PC-3 (cell line): ENCODE measurements at regions of chr5 and their contacts with region 1.

Region 1: GRCh38 chr5:38382898-38383297 is 124.5 kb downstream of the EGFLAM start:
- DNase-seq: peak; percentile 92
- ATAC-seq: peak; percentile 86
- H3K4me3 ChIP-seq: no peak overlapping the region
- H3K27ac ChIP-seq: no peak overlapping the region
- H3K4me1 ChIP-seq: peaks cover 22% of the 10 kb centered on the region
- H3K27me3 ChIP-seq: no peaks in the 10 kb centered on the region
- CTCF ChIP-seq: peak; percentile 97

Region 2: DNA sequence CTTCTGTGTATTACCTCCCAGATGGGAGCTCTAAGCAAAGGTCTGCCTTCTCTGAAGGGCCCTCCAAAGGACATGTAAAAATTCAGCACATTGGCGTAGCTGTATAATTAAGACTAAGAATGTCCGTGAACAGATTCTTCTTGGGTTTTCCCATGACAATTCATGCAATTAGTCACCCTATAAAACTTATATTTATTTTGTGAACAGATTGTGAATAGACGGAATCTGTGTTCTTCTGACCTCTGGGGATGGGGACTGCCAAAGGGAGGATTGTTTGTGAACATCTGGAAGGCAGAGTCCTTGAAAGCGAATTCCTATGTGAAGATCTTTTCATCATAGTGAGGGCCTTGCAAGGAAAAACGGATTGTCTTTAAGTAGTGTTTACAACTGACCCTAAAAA is 13.2 kb before region 1 on chr5:
- CTCF ChIA-PET with region 1: no interaction called
- POLR2A ChIA-PET with region 1: no interaction called
- intact Hi-C with region 1: loop called (anchors 1 kb)
- DNase-seq: peak; percentile 70
- ATAC-seq: peak; percentile 92
- H3K4me3 ChIP-seq: no peak overlapping the region
- H3K27ac ChIP-seq: no peak overlapping the region
- H3K4me1 ChIP-seq: peaks cover 12% of the 10 kb centered on the region
- H3K27me3 ChIP-seq: peaks cover 28% of the 10 kb centered on the region
- CTCF ChIP-seq: no peak

Region 3: DNA sequence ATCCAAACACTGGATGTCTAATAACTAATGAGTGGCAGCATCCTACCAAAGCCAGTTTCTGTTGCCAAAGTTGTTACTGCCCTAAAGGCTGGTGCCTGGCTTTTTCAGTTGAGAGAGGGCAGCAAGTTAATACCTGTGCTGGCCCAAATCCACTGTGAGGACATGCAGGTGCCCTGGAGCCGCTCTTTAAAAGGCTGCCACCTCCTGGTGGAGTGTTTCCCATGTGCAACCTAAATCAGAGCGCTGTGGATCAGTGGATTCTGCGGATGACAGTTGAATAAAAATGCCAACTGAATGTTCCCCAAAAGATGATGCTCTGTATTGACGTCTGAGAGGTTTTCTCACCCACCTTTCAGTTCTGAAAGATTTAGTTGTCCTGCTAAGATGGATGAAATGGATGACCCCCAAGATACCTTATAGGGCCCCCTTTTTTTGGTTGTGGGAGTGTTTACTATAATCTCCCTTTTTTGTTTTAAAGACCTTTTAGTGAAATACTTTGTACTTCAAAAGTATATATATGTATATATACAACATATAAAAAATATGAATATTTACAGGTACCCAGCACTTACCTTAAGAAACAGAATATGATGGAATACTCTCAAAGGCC is 21.9 kb after region 1 on chr5:
- CTCF ChIA-PET with region 1: no interaction called
- POLR2A ChIA-PET with region 1: no interaction called
- intact Hi-C with region 1: loop called (anchors 2 kb)
- DNase-seq: peak; percentile 51
- ATAC-seq: peak; percentile 68
- H3K4me3 ChIP-seq: no peak overlapping the region
- H3K27ac ChIP-seq: no peak overlapping the region
- H3K4me1 ChIP-seq: no peaks in the 10 kb centered on the region
- H3K27me3 ChIP-seq: peaks cover 58% of the 10 kb centered on the region
- CTCF ChIP-seq: peak; percentile 80

Region 4: DNA sequence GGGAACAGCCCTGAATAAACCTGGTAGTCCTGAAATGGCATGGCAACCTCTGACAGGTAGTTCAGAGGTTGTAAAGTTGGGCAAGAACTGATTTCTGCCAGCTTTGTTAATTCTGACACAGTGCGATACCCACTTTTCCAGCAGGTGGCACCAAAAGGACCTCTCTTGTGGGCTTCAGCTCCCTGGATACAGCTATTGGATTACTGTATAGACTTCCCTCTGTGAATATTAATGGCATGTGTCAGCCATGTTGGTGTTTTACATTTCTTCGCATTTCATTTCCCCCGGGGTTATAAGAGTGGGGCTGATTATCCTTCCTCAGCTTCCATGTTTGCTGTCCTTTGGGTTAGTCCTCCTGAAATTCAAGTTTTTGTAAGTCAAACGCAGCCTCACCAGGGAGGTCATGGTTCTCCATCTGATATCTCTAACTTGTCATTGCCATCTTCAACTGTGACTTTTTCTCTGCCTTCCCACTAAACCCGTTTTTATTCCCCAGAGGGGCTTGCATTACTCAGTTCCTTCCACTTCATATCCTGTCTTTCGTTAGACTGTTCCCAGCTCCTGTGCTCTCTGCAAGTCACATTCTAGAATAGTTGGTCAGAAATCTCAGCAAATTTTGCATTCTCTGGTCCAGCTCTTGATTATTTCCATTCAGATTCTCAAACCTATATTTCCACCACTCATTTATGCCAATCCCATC is 37.9 kb after region 1 on chr5:
- CTCF ChIA-PET with region 1: interaction called, 4 read pairs
- POLR2A ChIA-PET with region 1: no interaction called
- intact Hi-C with region 1: loop called (anchors 5 kb)
- DNase-seq: peak; percentile 83
- ATAC-seq: peak; percentile 87
- H3K4me3 ChIP-seq: no peak overlapping the region
- H3K27ac ChIP-seq: no peak overlapping the region
- H3K4me1 ChIP-seq: peaks cover 5% of the 10 kb centered on the region
- H3K27me3 ChIP-seq: peaks cover 3% of the 10 kb centered on the region; the same call in 1 of the 2 replicates
- CTCF ChIP-seq: peak; percentile 92

Region 5: DNA sequence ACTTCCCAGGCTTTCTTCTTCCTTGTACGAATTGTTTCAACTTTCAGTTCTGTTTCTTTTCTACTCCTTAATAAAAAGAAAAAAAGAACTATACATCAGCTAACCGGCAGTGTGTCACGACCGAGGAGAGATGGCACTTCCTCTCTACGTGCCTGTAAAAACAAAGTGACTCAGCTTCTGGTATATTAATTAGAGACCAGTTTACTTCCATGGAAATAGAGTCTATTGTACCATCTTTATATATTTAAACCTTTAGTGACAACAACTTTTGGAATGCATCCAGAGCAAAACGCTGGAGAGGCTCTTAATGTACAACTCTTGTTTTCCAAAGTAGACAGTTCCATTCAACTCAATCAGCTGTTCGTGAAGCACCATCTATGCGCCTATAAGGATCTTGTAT is 268.0 kb after region 1 on chr5:
- CTCF ChIA-PET with region 1: no interaction called
- POLR2A ChIA-PET with region 1: no interaction called
- intact Hi-C with region 1: loop called (anchors 2 kb)
- DNase-seq: peak; percentile 74
- ATAC-seq: peak; percentile 93
- H3K4me3 ChIP-seq: peak overlapping the region; percentile 59
- H3K27ac ChIP-seq: no peak overlapping the region
- H3K4me1 ChIP-seq: peaks cover 16% of the 10 kb centered on the region
- H3K27me3 ChIP-seq: no peaks in the 10 kb centered on the region
- CTCF ChIP-seq: no peak

Region 6: DNA sequence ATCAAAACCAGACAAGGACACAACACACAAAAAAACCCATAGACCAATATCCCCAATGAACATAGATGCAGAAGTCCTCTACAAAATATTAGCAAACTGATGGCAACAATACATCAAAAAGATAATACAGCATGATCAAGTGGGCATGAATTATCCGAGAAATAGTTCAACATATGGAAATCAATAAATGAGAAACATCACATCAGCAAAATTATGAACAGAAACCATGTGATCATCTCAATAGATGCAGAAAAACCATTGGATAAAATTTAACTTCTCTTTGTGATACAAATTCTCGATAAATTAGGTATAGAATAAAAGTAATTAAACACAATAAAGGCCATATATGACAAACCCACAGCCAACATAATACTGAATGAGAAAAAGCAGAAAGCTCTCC is 911.8 kb after region 1 on chr5:
- CTCF ChIA-PET with region 1: no interaction called
- POLR2A ChIA-PET with region 1: interaction called, 12 read pairs
- intact Hi-C with region 1: no loop called
- DNase-seq: no peak
- ATAC-seq: no peak
- H3K4me3 ChIP-seq: no peak overlapping the region
- H3K27ac ChIP-seq: no peak overlapping the region
- H3K4me1 ChIP-seq: no peaks in the 10 kb centered on the region
- H3K27me3 ChIP-seq: no peaks in the 10 kb centered on the region
- CTCF ChIP-seq: no peak